Body of pancreas (tissue), 4 donors: ENCODE measurements at regions of chr13 and their contacts with region 1.

Region 1: GRCh38 chr13:52968074-52968700 is 60.4 kb upstream of the OLFM4 start:
- DNase-seq: peak; percentile 88 to 89 (median 88)
- ATAC-seq: peak; percentile 98
- H3K4me3 ChIP-seq: no peak overlapping the region
- H3K27ac ChIP-seq: no peak overlapping the region
- H3K4me1 ChIP-seq: peaks cover 24% of the 10 kb centered on the region
- H3K27me3 ChIP-seq: no peaks in the 10 kb centered on the region
- CTCF ChIP-seq: peak; percentile 61 to 100 (median 95)
- POLR2A ChIP-seq: peak in 1 of 3 donors; percentile 8

Region 2: DNA sequence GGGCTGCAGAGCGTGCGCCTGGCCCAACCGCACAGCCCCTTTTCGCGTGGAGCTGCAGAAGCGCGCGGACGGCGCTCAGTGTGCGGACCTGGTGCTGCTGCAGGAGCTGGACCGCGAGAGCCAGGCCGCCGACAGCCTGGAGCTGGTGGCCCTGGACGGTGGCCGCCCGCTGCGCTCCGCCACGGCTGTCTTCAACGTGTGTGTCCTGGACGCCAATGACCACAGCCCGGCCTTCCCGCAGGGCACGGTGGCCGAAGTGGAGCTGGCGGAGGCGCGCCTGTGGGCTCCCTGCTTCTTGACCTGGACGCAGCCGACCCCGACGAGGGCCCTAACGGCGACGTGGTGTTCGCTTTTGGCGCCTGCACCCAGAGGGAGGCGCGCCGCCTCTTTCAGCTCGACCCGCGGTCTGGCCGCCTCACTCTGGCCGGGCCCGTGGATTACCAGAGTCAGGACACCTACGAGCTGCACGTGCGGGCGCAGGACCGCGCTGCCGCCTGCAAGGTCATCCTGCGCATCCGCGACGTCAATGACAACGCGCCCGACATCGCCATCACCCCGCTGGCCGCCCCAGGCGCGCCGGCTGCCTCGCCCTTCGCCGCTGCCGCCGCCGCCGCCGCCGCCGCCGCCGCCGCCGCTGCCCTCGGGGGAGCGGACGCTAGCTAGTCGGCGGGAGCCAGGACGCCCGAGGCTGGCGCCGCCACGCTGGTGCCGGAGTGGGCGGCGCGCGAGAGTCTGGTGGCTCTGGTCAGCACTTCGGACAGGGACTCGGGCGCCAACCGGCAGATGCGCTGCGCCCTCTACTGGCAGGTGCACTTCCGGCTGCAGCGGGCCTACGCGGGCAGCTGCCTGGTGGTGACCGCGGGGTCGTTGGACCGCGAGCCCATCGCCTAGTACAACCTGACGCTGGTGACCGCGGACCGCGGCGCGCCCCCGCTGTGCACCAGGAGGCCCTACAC is 232.6 kb after region 1 on chr13:
- intact Hi-C with region 1: loop called (anchors 10 kb)
- DNase-seq: peak; percentile 68 to 83 (median 76)
- ATAC-seq: peak; percentile 89
- H3K4me3 ChIP-seq: no peak overlapping the region
- H3K27ac ChIP-seq: no peak overlapping the region
- H3K4me1 ChIP-seq: peaks cover 13% of the 10 kb centered on the region
- H3K27me3 ChIP-seq: peaks cover 0 to 9% of the 10 kb centered on the region in 2 donors
- CTCF ChIP-seq: peak; percentile 61 to 84 (median 69)
- POLR2A ChIP-seq: no peak

Region 3: GRCh38 chr13:53254500-53254899 is 286.3 kb after region 1 on chr13:
- intact Hi-C with region 1: no loop called
- DNase-seq: peak in 1 of 4 donors; percentile 17
- ATAC-seq: no peak
- H3K4me3 ChIP-seq: no peak overlapping the region
- H3K27ac ChIP-seq: no peak overlapping the region
- H3K4me1 ChIP-seq: no peaks in the 10 kb centered on the region
- H3K27me3 ChIP-seq: no peaks in the 10 kb centered on the region
- CTCF ChIP-seq: no peak
- POLR2A ChIP-seq: no peak